ENCODE measurements at regions of chr2 and their contacts with region 1.

Region 1: GRCh38 chr2:206798000-206798399 is 32.6 kb downstream of the FASTKD2 start:
- DNase-seq: no peak
- H3K4me3 ChIP-seq: no peak overlapping the region
- CTCF ChIP-seq: no peak

Region 2: GRCh38 chr2:207487650-207488311 is 689.8 kb after region 1 on chr2:
- in situ Hi-C with region 1: loop called (anchors 10 kb)
- DNase-seq: peak; percentile 63
- H3K4me3 ChIP-seq: no peak overlapping the region
- CTCF ChIP-seq: peak; percentile 52

Region 3: DNA sequence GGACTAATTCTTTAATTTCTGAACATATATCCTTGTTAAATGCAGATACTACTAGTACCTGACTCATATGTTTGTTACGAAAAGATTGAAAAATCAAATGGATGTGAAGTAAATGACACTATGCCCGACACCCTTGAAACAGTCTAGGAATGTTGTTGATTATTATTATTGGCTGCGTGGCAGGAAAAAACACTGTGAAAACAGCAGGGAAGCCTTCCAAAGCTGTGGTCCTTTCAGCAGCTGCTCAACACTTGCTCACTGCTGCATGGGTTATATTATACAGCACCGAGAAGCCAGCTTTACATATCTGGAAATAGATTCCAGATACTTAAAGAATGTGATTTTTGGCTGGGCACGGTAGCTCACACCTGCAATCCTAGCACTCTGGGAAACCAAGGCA is 1299.8 kb after region 1 on chr2:
- in situ Hi-C with region 1: no loop called
- DNase-seq: peak; percentile 26
- H3K4me3 ChIP-seq: no peak overlapping the region
- CTCF ChIP-seq: no peak